Activated T-helper 2 cell treated with anti-CD3 and anti-CD28 coated beads, Interferon-gamma antibody, Interleukin-2, Interleukin-4, amounts not matched to agents 10 μg/mL and 5 μg/mL and 100 μg/mL, durations not matched to agents 14 hours and 24 hours and 36 hours (primary cell): ENCODE measurements at regions of chr4 and their contacts with region 1.

Region 1: GRCh38 chr4:159206427-159206871 is 103.6 kb downstream of the RAPGEF2 start:
- DNase-seq: peak; percentile 21
- H3K4me3 Mint-ChIP-seq: peak overlapping the region; percentile 44
- H3K27ac Mint-ChIP-seq: peak overlapping the region; percentile 80
- H3K4me1 Mint-ChIP-seq: peaks cover 41% of the 10 kb centered on the region
- H3K27me3 Mint-ChIP-seq: no peaks in the 10 kb centered on the region

Region 2: DNA sequence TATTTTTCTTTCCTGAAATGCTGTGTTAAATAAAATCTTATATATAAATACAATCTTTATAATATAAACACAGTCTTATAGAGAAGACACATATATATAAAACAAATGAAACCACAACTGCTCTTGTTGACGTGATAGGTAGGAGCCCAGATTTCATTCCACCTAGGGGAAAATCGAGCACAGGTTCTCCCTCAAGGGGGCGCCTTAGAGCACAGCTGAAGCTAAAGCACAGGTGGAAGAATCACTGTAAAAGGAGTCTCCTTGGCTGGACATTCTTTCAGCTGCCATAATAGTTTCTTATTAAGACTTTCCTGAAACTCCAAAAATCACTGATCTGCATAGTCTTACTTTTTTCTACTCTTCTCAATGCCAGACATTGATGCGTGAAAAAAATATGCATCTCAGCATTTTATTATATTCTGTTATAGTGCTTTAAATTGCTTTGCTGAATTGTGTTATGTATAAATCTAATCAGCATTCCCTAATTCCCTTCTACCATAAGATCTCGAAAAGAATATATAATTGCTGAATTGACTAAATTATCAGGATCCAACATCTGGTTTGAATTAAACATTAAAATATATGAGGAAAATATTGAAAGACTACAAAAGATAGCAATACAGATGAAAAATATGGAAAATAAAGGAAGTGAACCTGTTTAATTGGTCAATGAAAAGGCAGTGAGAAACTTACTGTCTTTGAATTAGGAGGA is 710.3 kb before region 1 on chr4:
- intact Hi-C with region 1: loop called (anchors 1 kb)
- DNase-seq: no peak
- H3K4me3 Mint-ChIP-seq: no peak overlapping the region
- H3K27ac Mint-ChIP-seq: no peak overlapping the region
- H3K4me1 Mint-ChIP-seq: no peaks in the 10 kb centered on the region
- H3K27me3 Mint-ChIP-seq: peaks cover 2% of the 10 kb centered on the region

Region 3: GRCh38 chr4:158729716-158730559 is 476.5 kb before region 1 on chr4:
- intact Hi-C with region 1: loop called (anchors 1 kb)
- DNase-seq: peak; percentile 28
- H3K4me3 Mint-ChIP-seq: no peak overlapping the region
- H3K27ac Mint-ChIP-seq: no peak overlapping the region
- H3K4me1 Mint-ChIP-seq: peaks cover 30% of the 10 kb centered on the region
- H3K27me3 Mint-ChIP-seq: peaks cover 30% of the 10 kb centered on the region

Region 4: DNA sequence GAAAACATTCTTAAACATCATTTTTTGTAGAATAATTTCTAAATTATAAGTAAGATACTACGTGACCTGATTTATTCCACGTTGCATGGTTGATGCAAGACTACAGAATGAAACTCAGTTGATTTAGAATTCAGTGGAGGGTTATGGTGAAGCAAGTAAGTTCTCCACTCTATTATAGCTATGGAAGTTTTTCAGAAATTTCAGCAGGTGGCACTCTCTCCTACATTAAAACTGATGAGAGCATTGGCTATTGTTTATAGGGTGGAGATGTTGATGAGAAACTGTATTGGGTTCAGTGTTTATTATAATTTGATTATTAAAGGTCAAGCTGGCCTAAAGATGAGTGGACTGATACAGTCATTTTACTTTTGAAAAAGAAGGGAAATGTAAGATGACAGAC is 349.6 kb before region 1 on chr4:
- intact Hi-C with region 1: loop called (anchors 1 kb)
- DNase-seq: no peak
- H3K4me3 Mint-ChIP-seq: no peak overlapping the region
- H3K27ac Mint-ChIP-seq: no peak overlapping the region
- H3K4me1 Mint-ChIP-seq: peaks cover 2% of the 10 kb centered on the region
- H3K27me3 Mint-ChIP-seq: no peaks in the 10 kb centered on the region

Region 5: GRCh38 chr4:159175085-159175988 is 31.1 kb before region 1 on chr4:
- intact Hi-C with region 1: loop called (anchors 1 kb)
- DNase-seq: peak; percentile 31
- H3K4me3 Mint-ChIP-seq: no peak overlapping the region
- H3K27ac Mint-ChIP-seq: no peak overlapping the region
- H3K4me1 Mint-ChIP-seq: peaks cover 31% of the 10 kb centered on the region
- H3K27me3 Mint-ChIP-seq: peaks cover 14% of the 10 kb centered on the region

Region 6: GRCh38 chr4:159317203-159317602 is 110.8 kb after region 1 on chr4:
- intact Hi-C with region 1: no loop called
- DNase-seq: no peak
- H3K4me3 Mint-ChIP-seq: no peak overlapping the region
- H3K27ac Mint-ChIP-seq: no peak overlapping the region
- H3K4me1 Mint-ChIP-seq: no peaks in the 10 kb centered on the region
- H3K27me3 Mint-ChIP-seq: no peaks in the 10 kb centered on the region

Region 7: DNA sequence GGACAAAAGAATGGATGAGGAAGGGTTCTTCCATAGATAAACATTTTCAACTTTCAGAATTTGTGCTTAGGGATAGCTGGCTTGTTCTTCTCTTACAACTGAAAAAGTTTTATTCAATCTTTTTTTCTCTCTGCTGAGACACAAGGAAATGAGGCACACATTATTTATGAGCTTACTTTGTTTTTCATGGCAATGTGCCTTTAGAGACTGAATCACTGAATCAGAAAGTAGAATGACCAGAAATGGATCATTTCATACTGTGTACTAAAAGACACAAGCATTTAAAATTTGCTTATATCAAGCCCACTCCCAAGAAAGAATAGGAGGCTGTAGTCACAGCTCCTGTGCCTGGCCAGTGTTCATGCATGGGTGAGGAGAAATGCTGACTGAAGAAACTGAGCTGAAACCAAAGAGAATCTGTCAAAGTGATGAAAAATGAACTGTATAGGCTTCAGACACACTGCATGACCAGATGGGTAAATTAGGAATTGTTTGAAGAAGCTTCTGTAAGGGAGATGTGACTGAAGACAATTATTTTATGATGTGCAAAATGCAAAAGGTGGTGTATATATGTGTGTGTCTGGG is 310.2 kb after region 1 on chr4:
- intact Hi-C with region 1: no loop called
- DNase-seq: no peak
- H3K4me3 Mint-ChIP-seq: no peak overlapping the region
- H3K27ac Mint-ChIP-seq: no peak overlapping the region
- H3K4me1 Mint-ChIP-seq: no peaks in the 10 kb centered on the region
- H3K27me3 Mint-ChIP-seq: no peaks in the 10 kb centered on the region